B cell (primary cell): ENCODE measurements at regions of chr2 and their contacts with region 1.

Region 1: GRCh38 chr2:156332534-156333273 is at the start of gene NR4A2:
- DNase-seq: peak; percentile 97
- ATAC-seq: peak; percentile 56
- H3K4me3 ChIP-seq: peak within 1 kb of the TSS; percentile 90 to 99 (median 93)
- H3K4me3 Mint-ChIP-seq: peak within 1 kb of the TSS; percentile 95
- H3K27ac ChIP-seq: peak within 1 kb of the TSS; percentile 98 to 99
- H3K27ac Mint-ChIP-seq: peak within 1 kb of the TSS; percentile 99
- H3K4me1 ChIP-seq: peaks cover 43 to 52% of the 10 kb centered on the region in 2 donors
- H3K4me1 Mint-ChIP-seq: peaks cover 53% of the 10 kb centered on the region
- H3K27me3 ChIP-seq: peaks cover 2 to 45% (median 36%) of the 10 kb centered on the region in 4 experiments
- H3K27me3 Mint-ChIP-seq: peaks cover 30% of the 10 kb centered on the region
- CTCF ChIP-seq: no peak
- total RNA-seq, gene NR4A2: 30.6 and 33.8 TPM in 2 replicates

Region 2: DNA sequence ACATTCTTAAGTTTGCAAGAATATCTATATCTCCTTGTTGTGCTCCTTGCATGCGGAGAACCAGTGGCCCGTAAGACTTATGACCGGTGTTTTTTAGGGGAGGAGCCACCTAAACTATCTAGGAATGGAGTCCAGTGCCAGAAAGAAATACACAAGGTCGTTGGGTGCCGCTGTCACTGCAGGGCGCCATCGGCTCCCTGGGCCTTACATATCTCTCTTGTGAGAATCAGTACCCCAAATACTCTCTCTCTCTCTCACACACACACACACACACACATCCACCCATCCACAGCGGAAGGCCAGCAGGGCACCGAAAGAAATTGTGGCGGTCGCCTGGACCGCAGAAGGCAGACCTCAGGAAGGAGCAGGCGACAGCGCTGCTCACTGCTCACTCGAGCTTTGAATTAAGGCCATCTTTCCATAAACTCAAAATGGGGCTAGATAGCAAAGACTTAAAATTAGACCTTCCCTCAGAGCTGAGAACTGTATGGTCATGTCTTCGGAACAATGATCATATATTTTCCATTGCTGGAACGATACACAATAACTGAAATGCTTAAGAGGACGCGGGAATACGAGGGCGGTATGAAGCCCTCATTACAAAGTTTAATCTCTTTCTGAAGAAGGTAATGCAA is 10.5 kb before region 1 on chr2:
- CTCF ChIA-PET with region 1: interaction called, 10 read pairs
- POLR2A ChIA-PET with region 1: interaction called, 5 read pairs
- intact Hi-C with region 1: loop called (anchors 1 kb)
- DNase-seq: peak; percentile 69
- ATAC-seq: no peak
- H3K4me3 ChIP-seq: peak overlapping the region in 3 of 5 experiments; percentile 7 to 44 (median 16)
- H3K4me3 Mint-ChIP-seq: peak overlapping the region; percentile 76
- H3K27ac ChIP-seq: no peak overlapping the region
- H3K27ac Mint-ChIP-seq: peak overlapping the region; percentile 51
- H3K4me1 ChIP-seq: peaks cover 38 to 49% of the 10 kb centered on the region in 2 donors
- H3K4me1 Mint-ChIP-seq: peaks cover 42% of the 10 kb centered on the region
- H3K27me3 ChIP-seq: peaks cover 1 to 83% (median 79%) of the 10 kb centered on the region in 4 experiments
- H3K27me3 Mint-ChIP-seq: peaks cover 81% of the 10 kb centered on the region
- CTCF ChIP-seq: no peak

Region 3: DNA sequence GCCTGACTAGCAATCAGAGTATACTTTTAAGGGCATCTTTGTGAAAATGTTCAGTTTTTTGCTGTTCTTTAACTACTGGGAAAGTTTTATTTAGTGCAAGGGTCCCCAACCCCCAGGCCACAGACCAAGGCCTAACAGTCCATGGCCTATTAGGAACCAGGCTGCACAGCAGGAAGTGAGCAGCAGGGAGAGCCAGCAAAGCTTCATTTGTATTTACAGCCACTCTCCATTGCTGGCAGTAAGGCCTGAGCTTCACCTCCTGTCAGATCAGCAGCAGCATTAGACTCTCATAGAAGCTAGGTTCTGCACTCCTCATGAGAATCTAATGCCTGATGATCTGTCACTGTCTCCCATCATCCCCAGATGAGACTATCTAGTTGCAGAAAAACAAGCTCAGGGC is 16.9 kb after region 1 on chr2:
- CTCF ChIA-PET with region 1: interaction called, 26 read pairs
- POLR2A ChIA-PET with region 1: no interaction called
- intact Hi-C with region 1: no loop called
- DNase-seq: no peak
- ATAC-seq: no peak
- H3K4me3 ChIP-seq: no peak overlapping the region
- H3K4me3 Mint-ChIP-seq: no peak overlapping the region
- H3K27ac ChIP-seq: no peak overlapping the region
- H3K27ac Mint-ChIP-seq: no peak overlapping the region
- H3K4me1 ChIP-seq: no peaks in the 10 kb centered on the region
- H3K4me1 Mint-ChIP-seq: no peaks in the 10 kb centered on the region
- H3K27me3 ChIP-seq: no peaks in the 10 kb centered on the region
- H3K27me3 Mint-ChIP-seq: no peaks in the 10 kb centered on the region
- CTCF ChIP-seq: no peak

Region 4: GRCh38 chr2:156400706-156401678 is 68.3 kb after region 1 on chr2:
- CTCF ChIA-PET with region 1: interaction called, 29 read pairs
- POLR2A ChIA-PET with region 1: interaction called, 20 read pairs
- intact Hi-C with region 1: loop called (anchors 1 kb)
- DNase-seq: peak; percentile 92
- ATAC-seq: peak; percentile 77
- H3K4me3 ChIP-seq: peak overlapping the region; percentile 61 to 100 (median 76)
- H3K4me3 Mint-ChIP-seq: peak overlapping the region; percentile 95
- H3K27ac ChIP-seq: peak overlapping the region; percentile 91 to 98
- H3K27ac Mint-ChIP-seq: peak overlapping the region; percentile 98
- H3K4me1 ChIP-seq: peaks cover 10 to 24% of the 10 kb centered on the region in 2 donors
- H3K4me1 Mint-ChIP-seq: peaks cover 28% of the 10 kb centered on the region
- H3K27me3 ChIP-seq: no peaks in the 10 kb centered on the region
- H3K27me3 Mint-ChIP-seq: peaks cover 6% of the 10 kb centered on the region
- CTCF ChIP-seq: no peak

Region 5: DNA sequence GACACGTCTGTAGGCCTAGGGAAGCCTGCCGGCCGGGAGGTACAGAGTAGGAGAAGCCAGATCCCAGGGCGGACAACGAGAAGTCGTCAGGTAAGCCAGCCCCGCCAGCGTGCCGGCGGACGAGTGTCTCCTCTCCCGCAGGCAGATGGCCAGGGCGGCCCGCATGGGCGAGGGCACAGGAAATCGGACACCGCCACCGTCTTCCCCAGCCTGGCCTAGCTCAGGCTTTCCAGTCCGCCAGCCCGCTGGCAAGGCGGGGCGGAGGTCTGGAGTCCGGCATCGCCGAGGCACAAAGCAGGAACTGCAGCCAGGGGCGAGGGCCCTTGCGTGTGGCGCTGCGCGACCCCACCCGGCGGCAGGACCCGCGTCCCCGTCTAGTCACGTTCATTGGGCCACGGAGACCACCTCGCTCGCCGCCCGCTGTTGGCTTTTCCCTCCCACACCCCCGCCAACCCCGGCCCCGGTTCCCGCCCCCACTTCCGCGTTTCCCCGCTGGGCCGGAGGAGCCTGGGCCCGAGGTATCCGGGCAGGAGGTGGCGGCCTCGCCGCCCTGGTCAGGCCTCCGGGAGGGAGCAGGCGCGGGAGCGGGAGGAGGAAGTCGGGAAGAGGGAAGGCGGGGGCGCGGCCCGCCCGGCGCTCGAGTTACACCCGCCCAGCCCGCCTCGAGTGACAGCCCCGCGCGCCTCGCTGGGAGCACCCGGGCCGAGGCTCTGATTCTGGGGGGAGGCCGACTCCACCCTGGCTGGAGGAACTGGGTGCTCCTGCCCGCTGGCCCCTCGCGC is 103.2 kb after region 1 on chr2 and contains the start of gene GPD2:
- CTCF ChIA-PET with region 1: interaction called, 9 read pairs
- POLR2A ChIA-PET with region 1: interaction called, 6 read pairs
- intact Hi-C with region 1: loop called (anchors 2 kb)
- DNase-seq: peak; percentile 82
- ATAC-seq: peak; percentile 76
- H3K4me3 ChIP-seq: peak within 1 kb of the TSS; percentile 71 to 89 (median 74)
- H3K4me3 Mint-ChIP-seq: peak within 1 kb of the TSS; percentile 91
- H3K27ac ChIP-seq: peak within 1 kb of the TSS; percentile 62 to 85
- H3K27ac Mint-ChIP-seq: peak within 1 kb of the TSS; percentile 88
- H3K4me1 ChIP-seq: peaks cover 17 to 26% of the 10 kb centered on the region in 2 donors
- H3K4me1 Mint-ChIP-seq: peaks cover 34% of the 10 kb centered on the region
- H3K27me3 ChIP-seq: no peaks in the 10 kb centered on the region
- H3K27me3 Mint-ChIP-seq: no peaks in the 10 kb centered on the region
- CTCF ChIP-seq: no peak
- total RNA-seq, gene GPD2: 18.7 and 26.8 TPM in 2 replicates

Region 6: DNA sequence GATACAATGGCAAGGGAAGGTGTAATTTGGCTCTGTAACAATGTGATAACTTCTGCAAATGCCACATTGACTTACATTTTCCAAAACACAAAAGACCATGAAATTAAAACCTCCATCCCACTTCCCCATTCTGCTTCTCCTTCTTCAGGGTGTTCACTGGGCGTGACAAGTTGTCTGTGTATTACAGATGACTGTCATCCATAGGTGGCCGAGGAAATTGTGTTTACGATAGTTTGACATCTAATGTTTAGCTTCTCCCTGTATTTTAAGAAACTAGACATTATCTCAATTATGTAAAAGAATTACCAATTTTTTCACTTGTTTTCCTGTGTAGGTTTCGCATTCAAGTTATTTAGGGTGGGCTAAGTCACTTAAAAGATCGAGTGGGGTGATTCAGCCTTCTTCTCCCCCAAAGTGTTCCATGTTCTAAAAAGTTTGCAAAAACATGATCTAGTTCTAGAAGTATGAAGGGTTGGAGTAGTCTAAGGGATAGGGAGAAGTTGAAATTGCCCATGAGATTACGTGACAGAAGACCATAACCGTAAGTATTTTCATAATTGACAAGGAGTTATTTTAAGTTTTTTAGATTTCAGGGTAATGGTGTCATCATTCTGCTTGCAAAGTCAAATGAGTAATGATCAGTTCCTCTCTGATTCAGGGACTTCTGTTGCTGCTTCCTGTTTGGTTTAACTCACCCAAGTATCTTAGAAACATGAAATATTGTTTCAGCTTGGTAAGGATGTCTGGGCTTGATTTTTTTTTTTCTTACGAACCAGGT is 1136.4 kb after region 1 on chr2:
- CTCF ChIA-PET with region 1: no interaction called
- POLR2A ChIA-PET with region 1: no interaction called
- intact Hi-C with region 1: loop called (anchors 5 kb)
- DNase-seq: peak; percentile 91
- ATAC-seq: peak; percentile 80
- H3K4me3 ChIP-seq: peak overlapping the region; percentile 38 to 89 (median 55)
- H3K4me3 Mint-ChIP-seq: peak overlapping the region; percentile 87
- H3K27ac ChIP-seq: peak overlapping the region; percentile 96 to 99
- H3K27ac Mint-ChIP-seq: peak overlapping the region; percentile 99
- H3K4me1 ChIP-seq: peaks cover 61 to 68% of the 10 kb centered on the region in 2 donors
- H3K4me1 Mint-ChIP-seq: peaks cover 76% of the 10 kb centered on the region
- H3K27me3 ChIP-seq: no peaks in the 10 kb centered on the region
- H3K27me3 Mint-ChIP-seq: no peaks in the 10 kb centered on the region
- CTCF ChIP-seq: no peak